Body of pancreas (tissue), 4 donors: ENCODE measurements at regions of chr20 and their contacts with region 1.

Region 1: GRCh38 chr20:13105864-13106457 is 97.2 kb downstream of the SPTLC3 start:
- DNase-seq: peak in 1 of 4 donors; percentile 9
- ATAC-seq: no peak
- H3K4me3 ChIP-seq: no peak overlapping the region
- H3K27ac ChIP-seq: no peak overlapping the region
- H3K4me1 ChIP-seq: peaks cover 4% of the 10 kb centered on the region
- H3K27me3 ChIP-seq: no peaks in the 10 kb centered on the region
- CTCF ChIP-seq: peak; percentile 34 to 85 (median 69)
- POLR2A ChIP-seq: no peak

Region 2: GRCh38 chr20:12914804-12915203 is 191.2 kb before region 1 on chr20:
- intact Hi-C with region 1: no loop called
- DNase-seq: no peak
- ATAC-seq: no peak
- H3K4me3 ChIP-seq: no peak overlapping the region
- H3K27ac ChIP-seq: no peak overlapping the region
- H3K4me1 ChIP-seq: no peaks in the 10 kb centered on the region
- H3K27me3 ChIP-seq: no peaks in the 10 kb centered on the region
- CTCF ChIP-seq: no peak
- POLR2A ChIP-seq: no peak

Region 3: GRCh38 chr20:12925214-12925755 is 180.7 kb before region 1 on chr20:
- intact Hi-C with region 1: loop called (anchors 5 kb)
- DNase-seq: peak; percentile 60 to 74 (median 66)
- ATAC-seq: peak; percentile 93
- H3K4me3 ChIP-seq: no peak overlapping the region
- H3K27ac ChIP-seq: no peak overlapping the region
- H3K4me1 ChIP-seq: peaks cover 4% of the 10 kb centered on the region
- H3K27me3 ChIP-seq: no peaks in the 10 kb centered on the region
- CTCF ChIP-seq: peak; percentile 73 to 99 (median 95)
- POLR2A ChIP-seq: no peak

Region 4: GRCh38 chr20:12970372-12970821 is 135.6 kb before region 1 on chr20:
- intact Hi-C with region 1: loop called (anchors 5 kb)
- DNase-seq: peak in 2 of 4 donors; percentile 28 to 35
- ATAC-seq: no peak
- H3K4me3 ChIP-seq: no peak overlapping the region
- H3K27ac ChIP-seq: no peak overlapping the region
- H3K4me1 ChIP-seq: no peaks in the 10 kb centered on the region
- H3K27me3 ChIP-seq: no peaks in the 10 kb centered on the region
- CTCF ChIP-seq: peak in 6 of 7 experiments; percentile 26 to 85 (median 68)
- POLR2A ChIP-seq: no peak

Region 5: GRCh38 chr20:13037727-13038126 is 68.2 kb before region 1 on chr20:
- intact Hi-C with region 1: no loop called
- DNase-seq: no peak
- ATAC-seq: no peak
- H3K4me3 ChIP-seq: no peak overlapping the region
- H3K27ac ChIP-seq: no peak overlapping the region
- H3K4me1 ChIP-seq: peaks cover 9% of the 10 kb centered on the region
- H3K27me3 ChIP-seq: no peaks in the 10 kb centered on the region
- CTCF ChIP-seq: no peak
- POLR2A ChIP-seq: no peak

Region 6: GRCh38 chr20:13412806-13413445 is 307.0 kb after region 1 on chr20:
- intact Hi-C with region 1: no loop called
- DNase-seq: no peak
- ATAC-seq: no peak
- H3K4me3 ChIP-seq: no peak overlapping the region
- H3K27ac ChIP-seq: no peak overlapping the region
- H3K4me1 ChIP-seq: peaks cover 4% of the 10 kb centered on the region
- H3K27me3 ChIP-seq: no peaks in the 10 kb centered on the region
- CTCF ChIP-seq: no peak
- POLR2A ChIP-seq: no peak